PC-3 (cell line): ENCODE measurements at regions of chr10 and their contacts with region 1.

Region 1: DNA sequence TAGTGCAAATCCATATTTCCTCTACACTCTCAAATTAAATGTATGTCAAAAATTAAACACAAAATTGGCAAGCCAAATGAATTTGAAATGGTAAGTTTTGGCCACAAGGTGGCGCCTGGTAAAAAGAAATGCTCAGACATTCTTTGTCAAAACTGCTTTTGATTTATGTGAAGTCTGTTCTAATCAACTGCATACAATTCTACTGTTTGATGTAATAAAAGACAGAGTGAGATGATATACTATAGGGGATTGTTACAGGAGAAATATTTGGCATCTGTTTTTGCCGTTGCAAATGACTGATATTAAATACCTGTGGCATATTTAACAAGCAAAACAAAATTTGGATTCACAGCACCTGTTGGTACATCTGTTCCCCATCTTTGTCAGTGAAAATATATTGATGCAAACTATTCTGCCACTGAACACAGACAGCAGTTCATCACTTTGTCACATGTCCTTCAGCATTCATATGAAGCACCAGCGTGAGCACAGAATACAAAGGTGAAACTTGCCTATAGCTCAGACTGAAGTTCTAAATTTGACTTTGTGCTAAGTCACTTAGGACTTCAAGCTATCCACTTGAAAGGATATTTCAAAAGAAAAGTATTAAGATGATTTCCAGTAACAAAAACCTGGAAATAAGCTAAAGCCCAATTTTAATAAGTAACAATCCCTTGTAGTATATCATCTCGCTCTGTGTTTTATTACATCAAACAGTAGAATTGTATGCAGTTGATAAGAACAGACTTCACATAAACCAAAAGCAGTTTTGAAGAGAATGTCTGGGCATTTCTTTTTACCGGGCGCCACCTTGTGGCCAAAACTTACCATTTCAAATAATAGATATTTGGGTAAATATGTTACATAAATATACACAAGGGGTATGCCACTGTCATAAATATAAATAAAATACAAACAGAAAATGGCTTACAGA is 10.2 kb upstream of the CH25H start:
- DNase-seq: peak; percentile 73
- ATAC-seq: peak; percentile 43; the same call in 1 of the 2 replicates
- H3K4me3 ChIP-seq: no peak overlapping the region
- H3K27ac ChIP-seq: no peak overlapping the region
- H3K4me1 ChIP-seq: peaks cover 6% of the 10 kb centered on the region; the same call in 1 of the 2 replicates
- H3K27me3 ChIP-seq: no peaks in the 10 kb centered on the region
- CTCF ChIP-seq: peak; percentile 75

Region 2: DNA sequence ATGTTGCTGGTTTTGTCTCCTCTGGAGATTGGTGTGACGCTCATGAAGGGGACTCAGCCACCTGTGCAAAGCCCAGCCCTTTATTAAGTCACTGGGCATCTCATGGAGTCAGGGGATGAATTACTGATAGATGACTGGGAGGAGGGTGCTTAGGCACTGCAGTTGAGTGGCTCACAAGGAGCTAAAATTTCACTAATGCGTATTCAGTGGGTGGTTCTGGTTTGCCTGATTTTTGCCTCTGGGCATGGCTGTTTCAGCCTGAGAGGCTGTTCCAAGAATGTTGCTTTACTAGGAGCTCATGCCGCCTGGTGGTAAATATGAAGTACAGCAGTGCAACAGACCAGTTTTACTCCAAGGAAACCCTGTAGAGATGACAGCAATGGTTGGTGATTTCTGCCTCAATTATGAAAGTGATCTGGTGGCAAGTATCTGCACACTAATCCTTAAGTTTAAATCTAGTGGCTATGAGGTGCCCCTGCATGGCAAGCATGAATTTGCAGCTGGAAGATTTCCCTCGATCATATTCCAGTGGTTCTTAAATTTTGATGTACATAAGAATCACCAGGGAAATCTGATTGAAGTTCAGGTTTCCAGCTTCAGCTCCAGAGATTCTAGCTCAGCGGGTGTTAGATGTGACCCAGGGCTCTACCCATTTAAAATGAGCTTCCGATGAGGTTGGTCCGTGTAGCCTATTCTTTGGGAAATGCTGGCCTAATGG is 284.6 kb before region 1 on chr10:
- CTCF ChIA-PET with region 1: no interaction called
- POLR2A ChIA-PET with region 1: no interaction called
- intact Hi-C with region 1: loop called (anchors 2 kb)
- DNase-seq: peak; percentile 86
- ATAC-seq: peak; percentile 76
- H3K4me3 ChIP-seq: no peak overlapping the region
- H3K27ac ChIP-seq: peak overlapping the region; percentile 15; the same call in 1 of the 2 replicates
- H3K4me1 ChIP-seq: peaks cover 13% of the 10 kb centered on the region
- H3K27me3 ChIP-seq: no peaks in the 10 kb centered on the region
- CTCF ChIP-seq: peak; percentile 81

Region 3: GRCh38 chr10:89029785-89030437 is 187.4 kb before region 1 on chr10:
- CTCF ChIA-PET with region 1: no interaction called
- POLR2A ChIA-PET with region 1: no interaction called
- intact Hi-C with region 1: loop called (anchors 1 kb)
- DNase-seq: peak; percentile 73
- ATAC-seq: peak; percentile 54
- H3K4me3 ChIP-seq: 0 out of 2 replicates have a peak overlapping the region, but pooled peaks have one; percentile 43
- H3K27ac ChIP-seq: no peak overlapping the region
- H3K4me1 ChIP-seq: peaks cover 22% of the 10 kb centered on the region
- H3K27me3 ChIP-seq: no peaks in the 10 kb centered on the region
- CTCF ChIP-seq: peak; percentile 83

Region 4: GRCh38 chr10:89147256-89147655 is 70.1 kb before region 1 on chr10:
- CTCF ChIA-PET with region 1: no interaction called
- POLR2A ChIA-PET with region 1: no interaction called
- intact Hi-C with region 1: loop called (anchors 2 kb)
- DNase-seq: peak; percentile 54
- ATAC-seq: peak; percentile 66
- H3K4me3 ChIP-seq: no peak overlapping the region
- H3K27ac ChIP-seq: no peak overlapping the region
- H3K4me1 ChIP-seq: no peaks in the 10 kb centered on the region
- H3K27me3 ChIP-seq: no peaks in the 10 kb centered on the region
- CTCF ChIP-seq: no peak

Region 5: GRCh38 chr10:89262086-89263051 is 45.0 kb after region 1 on chr10:
- CTCF ChIA-PET with region 1: no interaction called
- POLR2A ChIA-PET with region 1: no interaction called
- intact Hi-C with region 1: no loop called
- DNase-seq: peak; percentile 96
- ATAC-seq: peak; percentile 76
- H3K4me3 ChIP-seq: peak overlapping the region; percentile 40
- H3K27ac ChIP-seq: peak overlapping the region; percentile 99
- H3K4me1 ChIP-seq: peaks cover 60% of the 10 kb centered on the region
- H3K27me3 ChIP-seq: no peaks in the 10 kb centered on the region
- CTCF ChIP-seq: no peak

Region 6: GRCh38 chr10:89414146-89414878 is 197.0 kb after region 1 on chr10 and contains the start of gene IFIT5:
- CTCF ChIA-PET with region 1: no interaction called
- POLR2A ChIA-PET with region 1: no interaction called
- intact Hi-C with region 1: loop called (anchors 1 kb)
- DNase-seq: peak; percentile 56
- ATAC-seq: peak; percentile 79
- H3K4me3 ChIP-seq: peak within 1 kb of the TSS; percentile 80
- H3K27ac ChIP-seq: peak within 1 kb of the TSS; percentile 71
- H3K4me1 ChIP-seq: peaks cover 31% of the 10 kb centered on the region
- H3K27me3 ChIP-seq: no peaks in the 10 kb centered on the region
- CTCF ChIP-seq: no peak
- total RNA-seq, gene IFIT5: 8.9 and 10.7 TPM in 2 replicates